SK-N-SH (cell line): ENCODE measurements at regions of chr12 and their contacts with region 1.

Region 1: DNA sequence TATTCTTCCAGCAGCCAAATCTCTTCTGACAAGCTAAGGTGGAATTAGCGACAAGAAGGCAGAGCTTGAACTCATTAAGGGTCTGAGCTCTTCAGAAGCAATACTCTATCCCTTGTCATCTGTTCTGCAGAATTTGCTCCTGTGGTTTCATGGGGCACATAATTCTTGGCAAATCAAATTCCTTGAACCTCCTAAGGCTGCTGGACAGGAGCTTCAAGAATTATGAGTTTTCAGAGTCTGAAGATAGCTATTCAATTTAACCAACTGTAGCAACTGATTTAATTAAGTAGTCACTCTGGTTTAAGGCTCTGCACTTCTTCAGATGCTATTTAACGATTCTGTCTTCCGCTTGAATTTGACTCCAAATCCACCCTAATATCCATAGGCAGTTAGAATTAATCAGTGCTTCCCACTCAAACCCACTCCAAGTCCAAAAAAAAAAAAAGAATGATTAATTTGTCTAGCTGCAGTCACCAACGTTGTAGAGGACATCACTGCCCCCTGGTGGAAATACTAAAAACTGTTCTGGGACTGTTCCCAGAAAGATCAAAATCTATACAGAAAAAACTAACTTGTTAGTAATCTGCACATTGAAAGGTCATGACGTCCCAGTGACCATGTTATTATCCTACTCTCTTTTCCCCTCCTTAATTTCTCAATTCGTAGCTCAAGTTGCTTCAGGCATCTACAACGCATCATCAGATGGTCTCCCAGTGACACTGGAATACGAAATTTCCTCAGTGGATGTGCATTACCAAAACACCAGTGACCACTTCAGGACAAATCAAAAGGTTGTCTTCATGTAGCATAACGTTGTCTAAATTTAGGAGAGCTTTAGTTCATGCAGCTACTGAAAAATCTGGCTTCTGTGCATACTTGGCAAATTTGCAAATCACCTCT is 169.8 kb downstream of the KIF21A start:
- DNase-seq: peak; percentile 28
- H3K4me3 ChIP-seq: no peak overlapping the region; a peak in 1 of 4 replicates
- H3K27ac ChIP-seq: no peak overlapping the region
- H3K4me1 ChIP-seq: no peaks in the 10 kb centered on the region; a peak in 2 of 4 replicates
- H3K27me3 ChIP-seq: no peaks in the 10 kb centered on the region
- CTCF ChIP-seq: peak; percentile 74
- EP300 ChIP-seq: peak in 1 of 2 experiments; percentile 33; a peak in 1 of 4 replicates
- RAD21 ChIP-seq: peak; percentile 87

Region 2: GRCh38 chr12:38327356-38327755 is 945.8 kb before region 1 on chr12:
- CTCF ChIA-PET with region 1: interaction called, 11 read pairs
- POLR2A ChIA-PET with region 1: no interaction called
- DNase-seq: no peak
- H3K4me3 ChIP-seq: no peak overlapping the region
- H3K27ac ChIP-seq: no peak overlapping the region
- H3K4me1 ChIP-seq: no peaks in the 10 kb centered on the region; a peak in 1 of 4 replicates
- H3K27me3 ChIP-seq: no peaks in the 10 kb centered on the region
- CTCF ChIP-seq: no peak
- EP300 ChIP-seq: no peak
- RAD21 ChIP-seq: no peak

Region 3: GRCh38 chr12:38906482-38907170 is 366.5 kb before region 1 on chr12:
- CTCF ChIA-PET with region 1: interaction called, 50 read pairs
- POLR2A ChIA-PET with region 1: no interaction called
- DNase-seq: peak; percentile 91
- H3K4me3 ChIP-seq: peak overlapping the region; percentile 54 to 67
- H3K27ac ChIP-seq: peak overlapping the region in 1 of 2 experiments; percentile 67; a peak in 1 of 4 replicates
- H3K4me1 ChIP-seq: peaks cover 0 to 7% of the 10 kb centered on the region in 2 experiments; a peak in 1 of 4 replicates
- H3K27me3 ChIP-seq: no peaks in the 10 kb centered on the region; the same call in 1 of the 2 replicates
- CTCF ChIP-seq: peak; percentile 81
- EP300 ChIP-seq: 0 out of 4 replicates have a peak, but pooled peaks of 1 of the 2 experiments have one; percentile 4
- RAD21 ChIP-seq: peak; percentile 78

Region 4: GRCh38 chr12:38921025-38921677 is 352.0 kb before region 1 on chr12:
- CTCF ChIA-PET with region 1: interaction called, 20 read pairs
- POLR2A ChIA-PET with region 1: no interaction called
- DNase-seq: peak; percentile 25
- H3K4me3 ChIP-seq: no peak overlapping the region
- H3K27ac ChIP-seq: no peak overlapping the region
- H3K4me1 ChIP-seq: peaks cover 0 to 2% of the 10 kb centered on the region in 2 experiments; a peak in 1 of 4 replicates
- H3K27me3 ChIP-seq: no peaks in the 10 kb centered on the region
- CTCF ChIP-seq: peak; percentile 65
- EP300 ChIP-seq: no peak
- RAD21 ChIP-seq: peak; percentile 78

Region 5: DNA sequence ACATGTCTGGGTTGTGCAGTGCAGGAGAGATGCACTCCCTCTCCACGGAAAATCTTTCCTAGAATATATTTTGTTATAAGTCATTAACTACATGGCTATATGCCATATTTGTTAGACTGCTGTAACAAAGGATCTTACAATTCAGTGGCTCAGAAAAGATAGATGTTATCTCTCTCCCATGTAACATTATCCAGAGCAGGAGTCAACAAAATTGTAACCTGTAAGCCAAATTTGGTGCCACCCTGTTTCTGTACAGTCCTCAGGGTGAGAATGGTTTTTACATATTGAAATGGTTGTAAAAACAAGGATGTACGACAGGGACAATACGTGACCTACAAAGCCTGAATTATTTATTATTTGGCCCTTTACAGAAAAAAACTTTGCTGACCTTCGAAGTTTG is 14.3 kb after region 1 on chr12:
- CTCF ChIA-PET with region 1: interaction called, 34 read pairs
- POLR2A ChIA-PET with region 1: no interaction called
- DNase-seq: peak; percentile 10
- H3K4me3 ChIP-seq: no peak overlapping the region
- H3K27ac ChIP-seq: peak overlapping the region in 1 of 2 experiments; percentile 47; a peak in 1 of 4 replicates
- H3K4me1 ChIP-seq: peaks cover 0 to 8% of the 10 kb centered on the region in 2 experiments; a peak in 2 of 4 replicates
- H3K27me3 ChIP-seq: no peaks in the 10 kb centered on the region
- CTCF ChIP-seq: no peak
- EP300 ChIP-seq: no peak
- RAD21 ChIP-seq: no peak

Region 6: DNA sequence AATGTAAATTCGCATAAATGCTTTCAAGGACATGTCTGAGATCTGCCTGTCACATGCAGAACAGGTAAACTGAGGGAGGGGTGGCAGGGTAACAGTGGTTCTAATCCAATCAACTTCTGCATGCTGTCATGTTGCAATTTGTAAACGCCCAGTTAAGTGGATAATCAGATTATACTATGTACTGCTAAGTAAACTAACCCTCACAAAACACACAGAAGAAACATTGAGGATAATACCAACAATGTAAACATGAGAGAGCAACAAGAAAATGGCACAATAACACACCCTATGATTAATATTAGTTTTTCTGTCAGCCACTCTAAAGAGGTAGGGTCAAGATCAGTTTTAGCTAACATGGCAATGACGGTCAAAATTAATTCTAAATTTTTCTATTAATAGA is 46.1 kb after region 1 on chr12:
- CTCF ChIA-PET with region 1: interaction called, 11 read pairs
- POLR2A ChIA-PET with region 1: no interaction called
- DNase-seq: no peak
- H3K4me3 ChIP-seq: no peak overlapping the region
- H3K27ac ChIP-seq: peak overlapping the region in 1 of 2 experiments; percentile 56; a peak in 1 of 4 replicates
- H3K4me1 ChIP-seq: no peaks in the 10 kb centered on the region; a peak in 1 of 4 replicates
- H3K27me3 ChIP-seq: no peaks in the 10 kb centered on the region
- CTCF ChIP-seq: no peak
- EP300 ChIP-seq: no peak
- RAD21 ChIP-seq: no peak

Region 7: GRCh38 chr12:39392154-39392925 is 119.2 kb after region 1 on chr12:
- CTCF ChIA-PET with region 1: no interaction called
- POLR2A ChIA-PET with region 1: no interaction called
- DNase-seq: no peak
- H3K4me3 ChIP-seq: no peak overlapping the region
- H3K27ac ChIP-seq: peak overlapping the region in 1 of 2 experiments; percentile 96; a peak in 2 of 4 replicates
- H3K4me1 ChIP-seq: peaks cover 0 to 66% of the 10 kb centered on the region in 2 experiments; a peak in 2 of 4 replicates
- H3K27me3 ChIP-seq: no peaks in the 10 kb centered on the region
- CTCF ChIP-seq: no peak
- EP300 ChIP-seq: no peak
- RAD21 ChIP-seq: no peak